ENCODE measurements at regions of chr5 and their contacts with region 1.

Region 1: DNA sequence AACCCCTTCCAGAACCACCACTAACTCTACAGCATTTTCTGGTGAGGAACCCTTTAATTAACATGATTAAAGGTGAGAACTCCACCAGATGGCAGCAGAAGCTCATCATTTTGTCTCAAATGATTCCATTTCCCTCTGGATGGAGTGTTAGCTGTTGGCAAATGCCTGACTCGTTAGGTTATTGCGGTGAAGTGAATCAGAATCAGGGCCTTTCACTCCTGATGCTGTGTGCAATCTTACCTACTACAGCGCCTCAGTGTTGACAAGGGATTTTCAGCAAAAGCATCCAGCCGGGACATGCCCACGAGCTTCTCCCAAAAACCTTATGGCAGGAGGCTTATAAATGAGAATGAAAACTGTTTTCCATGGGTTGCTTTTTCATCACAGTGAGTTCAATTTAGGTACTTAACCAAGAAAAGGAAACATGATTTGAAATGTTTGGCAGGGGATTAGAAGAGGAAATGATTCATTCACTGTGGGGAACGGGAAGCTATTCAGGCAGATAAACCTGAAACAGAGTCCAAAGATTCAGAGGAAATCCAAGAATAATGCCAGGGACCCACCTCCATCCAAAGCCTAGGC is 48.0 kb upstream of the CAST start:
- DNase-seq: peak; percentile 43 to 53 (median 50)
- H3K4me3 ChIP-seq: no peak overlapping the region
- H3K4me3 Mint-ChIP-seq: no peak overlapping the region
- H3K27ac ChIP-seq: no peak overlapping the region
- H3K27ac Mint-ChIP-seq: peak overlapping the region in 1 of 7 donors; percentile 54
- H3K4me1 ChIP-seq: peaks cover 4% of the 10 kb centered on the region
- H3K4me1 Mint-ChIP-seq: peaks cover 2 to 5% (median 4%) of the 10 kb centered on the region in 4 donors
- H3K27me3 ChIP-seq: peaks cover 4% of the 10 kb centered on the region
- H3K27me3 Mint-ChIP-seq: peaks cover 5 to 9% of the 10 kb centered on the region in 2 donors

Region 2: DNA sequence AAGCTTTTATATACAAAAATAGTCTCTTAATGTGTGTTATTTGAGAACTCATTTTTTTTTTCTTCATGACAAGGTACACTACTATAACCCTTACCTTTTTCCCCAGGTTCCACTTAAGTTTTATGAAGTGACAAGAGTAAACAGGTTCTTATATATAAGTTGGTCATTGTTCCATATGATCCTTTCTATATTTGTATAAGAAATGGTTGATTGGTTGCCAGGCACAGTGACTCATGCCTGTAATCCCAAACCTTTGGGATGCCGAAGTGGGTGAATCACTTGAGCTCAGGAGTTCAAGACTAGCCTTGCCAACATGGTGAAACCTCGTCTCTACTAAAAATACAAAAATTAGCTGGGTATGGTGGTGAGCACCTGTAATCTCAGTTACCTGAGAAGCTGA is 289.5 kb before region 1 on chr5:
- CTCF ChIA-PET with region 1: no interaction called
- POLR2A ChIA-PET with region 1: no interaction called
- intact Hi-C with region 1: no loop called
- DNase-seq: no peak
- H3K4me3 ChIP-seq: no peak overlapping the region
- H3K4me3 Mint-ChIP-seq: no peak overlapping the region
- H3K27ac ChIP-seq: no peak overlapping the region
- H3K27ac Mint-ChIP-seq: no peak overlapping the region
- H3K4me1 ChIP-seq: no peaks in the 10 kb centered on the region
- H3K4me1 Mint-ChIP-seq: no peaks in the 10 kb centered on the region
- H3K27me3 ChIP-seq: no peaks in the 10 kb centered on the region
- H3K27me3 Mint-ChIP-seq: peaks cover 1 to 5% of the 10 kb centered on the region in 2 donors

Region 3: GRCh38 chr5:96601811-96602244 is 12.4 kb before region 1 on chr5:
- CTCF ChIA-PET with region 1: interaction called, 51 read pairs
- POLR2A ChIA-PET with region 1: no interaction called
- intact Hi-C with region 1: no loop called
- DNase-seq: peak; percentile 62 to 72 (median 64)
- H3K4me3 ChIP-seq: no peak overlapping the region
- H3K4me3 Mint-ChIP-seq: no peak overlapping the region
- H3K27ac ChIP-seq: no peak overlapping the region
- H3K27ac Mint-ChIP-seq: peak overlapping the region in 1 of 7 donors; percentile 53
- H3K4me1 ChIP-seq: no peaks in the 10 kb centered on the region
- H3K4me1 Mint-ChIP-seq: peaks cover 0 to 4% (median 0%) of the 10 kb centered on the region in 4 donors
- H3K27me3 ChIP-seq: no peaks in the 10 kb centered on the region
- H3K27me3 Mint-ChIP-seq: peaks cover 3 to 8% of the 10 kb centered on the region in 2 donors

Region 4: DNA sequence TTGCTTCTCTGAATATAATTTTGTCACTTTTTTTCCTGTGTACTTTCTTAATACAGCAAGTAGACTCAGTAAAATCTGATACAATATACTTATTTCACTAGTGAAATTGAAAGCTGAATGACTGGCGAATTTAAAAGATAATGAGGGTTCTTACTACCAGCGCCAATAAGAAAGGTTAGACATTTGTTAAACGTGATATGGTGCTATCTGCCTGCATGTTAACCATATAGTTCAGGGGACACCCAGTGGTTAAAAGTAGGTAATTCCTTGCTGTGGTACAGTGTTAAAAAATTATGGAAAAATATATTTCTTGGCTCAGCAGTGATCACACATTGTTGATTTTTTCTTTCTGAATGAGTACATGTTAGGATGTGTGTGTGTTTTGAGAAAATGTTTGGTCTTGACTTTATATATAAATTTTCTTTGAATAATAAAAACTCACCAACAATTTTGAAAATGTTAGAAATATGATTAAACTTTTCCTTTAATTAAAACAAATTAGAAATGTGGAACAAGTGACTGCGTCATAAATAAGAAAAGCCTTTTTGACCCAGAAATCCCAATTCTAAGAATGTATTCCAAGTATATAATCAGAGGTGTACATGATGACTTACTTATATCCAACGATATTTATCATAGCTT is 73.7 kb after region 1 on chr5:
- CTCF ChIA-PET with region 1: interaction called, 74 read pairs
- POLR2A ChIA-PET with region 1: no interaction called
- intact Hi-C with region 1: loop called (anchors 1 kb)
- DNase-seq: peak; percentile 27 to 39 (median 33)
- H3K4me3 ChIP-seq: no peak overlapping the region
- H3K4me3 Mint-ChIP-seq: peak overlapping the region in 1 of 8 donors; percentile 70
- H3K27ac ChIP-seq: no peak overlapping the region
- H3K27ac Mint-ChIP-seq: peak overlapping the region in 4 of 7 donors; percentile 4 to 46 (median 30)
- H3K4me1 ChIP-seq: peaks cover 17% of the 10 kb centered on the region
- H3K4me1 Mint-ChIP-seq: peaks cover 22 to 55% (median 32%) of the 10 kb centered on the region in 4 donors
- H3K27me3 ChIP-seq: no peaks in the 10 kb centered on the region
- H3K27me3 Mint-ChIP-seq: no peaks in the 10 kb centered on the region

Region 5: GRCh38 chr5:96729156-96729555 is 115.0 kb after region 1 on chr5:
- CTCF ChIA-PET with region 1: interaction called, 52 read pairs
- POLR2A ChIA-PET with region 1: interaction called, 4 read pairs
- intact Hi-C with region 1: loop called (anchors 1 kb)
- DNase-seq: no peak
- H3K4me3 ChIP-seq: no peak overlapping the region
- H3K4me3 Mint-ChIP-seq: no peak overlapping the region
- H3K27ac ChIP-seq: no peak overlapping the region
- H3K27ac Mint-ChIP-seq: peak overlapping the region in 4 of 7 donors; percentile 2 to 86 (median 47)
- H3K4me1 ChIP-seq: no peaks in the 10 kb centered on the region
- H3K4me1 Mint-ChIP-seq: peaks cover 11 to 23% (median 15%) of the 10 kb centered on the region in 4 donors
- H3K27me3 ChIP-seq: no peaks in the 10 kb centered on the region
- H3K27me3 Mint-ChIP-seq: no peaks in the 10 kb centered on the region

Region 6: GRCh38 chr5:96752341-96753016 is 138.3 kb after region 1 on chr5:
- CTCF ChIA-PET with region 1: interaction called, 32 read pairs
- POLR2A ChIA-PET with region 1: no interaction called
- intact Hi-C with region 1: loop called (anchors 1 kb)
- DNase-seq: peak; percentile 44 to 66 (median 62)
- H3K4me3 ChIP-seq: no peak overlapping the region
- H3K4me3 Mint-ChIP-seq: no peak overlapping the region
- H3K27ac ChIP-seq: no peak overlapping the region
- H3K27ac Mint-ChIP-seq: peak overlapping the region in 3 of 7 donors; percentile 10 to 84 (median 50)
- H3K4me1 ChIP-seq: no peaks in the 10 kb centered on the region
- H3K4me1 Mint-ChIP-seq: peaks cover 0 to 3% (median under 1%) of the 10 kb centered on the region in 4 donors
- H3K27me3 ChIP-seq: no peaks in the 10 kb centered on the region
- H3K27me3 Mint-ChIP-seq: no peaks in the 10 kb centered on the region

Measured in CD4-positive, alpha-beta memory T cell (primary cell).